Activated CD8-positive, alpha-beta T cell treated with anti-CD3 and anti-CD28 coated beads for 36 hours (primary cell): ENCODE measurements at regions of chr2 and their contacts with region 1.

Region 1: GRCh38 chr2:222318026-222318711 is 19.4 kb upstream of the PAX3 start:
- DNase-seq: peak; percentile 53
- ATAC-seq: peak; percentile 67
- H3K4me3 Mint-ChIP-seq: peak overlapping the region; percentile 78
- H3K27ac Mint-ChIP-seq: no peak overlapping the region
- H3K4me1 Mint-ChIP-seq: peaks cover 7% of the 10 kb centered on the region
- H3K27me3 Mint-ChIP-seq: peaks cover 62% of the 10 kb centered on the region
- CTCF ChIP-seq: peak; percentile 45

Region 2: DNA sequence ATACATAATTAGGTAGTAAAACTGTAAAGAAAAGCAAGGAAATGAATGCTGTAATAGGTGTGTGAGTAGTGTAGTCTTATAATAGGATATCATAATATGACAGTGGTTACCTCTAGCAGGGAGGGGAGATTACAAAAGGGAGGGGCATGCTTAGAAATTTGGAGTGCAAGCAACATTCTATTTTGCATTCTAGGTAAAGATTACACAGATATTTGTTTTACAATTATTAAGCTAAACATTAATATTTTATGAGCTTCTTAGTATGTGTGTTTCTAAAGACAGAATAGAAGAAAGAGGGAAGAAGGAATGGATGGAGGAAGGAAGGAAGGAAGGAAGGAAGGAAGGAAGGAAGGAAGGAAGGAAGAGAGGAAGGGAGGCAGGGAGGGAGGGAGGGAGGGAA is 197.2 kb before region 1 on chr2:
- CTCF ChIA-PET with region 1: no interaction called
- POLR2A ChIA-PET with region 1: no interaction called
- intact Hi-C with region 1: no loop called
- DNase-seq: no peak
- ATAC-seq: no peak
- H3K4me3 Mint-ChIP-seq: no peak overlapping the region
- H3K27ac Mint-ChIP-seq: no peak overlapping the region
- H3K4me1 Mint-ChIP-seq: no peaks in the 10 kb centered on the region
- H3K27me3 Mint-ChIP-seq: no peaks in the 10 kb centered on the region
- CTCF ChIP-seq: no peak

Region 3: GRCh38 chr2:222424729-222425671 is 106.8 kb after region 1 on chr2:
- CTCF ChIA-PET with region 1: no interaction called
- POLR2A ChIA-PET with region 1: no interaction called
- intact Hi-C with region 1: loop called (anchors 10 kb)
- DNase-seq: peak; percentile 27
- ATAC-seq: peak; percentile 19
- H3K4me3 Mint-ChIP-seq: peak overlapping the region; percentile 75
- H3K27ac Mint-ChIP-seq: peak overlapping the region; percentile 78
- H3K4me1 Mint-ChIP-seq: peaks cover 38% of the 10 kb centered on the region
- H3K27me3 Mint-ChIP-seq: peaks cover 49% of the 10 kb centered on the region
- CTCF ChIP-seq: no peak

Region 4: GRCh38 chr2:222561817-222562645 is 243.9 kb after region 1 on chr2:
- CTCF ChIA-PET with region 1: interaction called, 21 read pairs
- POLR2A ChIA-PET with region 1: no interaction called
- intact Hi-C with region 1: loop called (anchors 5 kb)
- DNase-seq: peak; percentile 40
- ATAC-seq: peak; percentile 76
- H3K4me3 Mint-ChIP-seq: no peak overlapping the region
- H3K27ac Mint-ChIP-seq: no peak overlapping the region
- H3K4me1 Mint-ChIP-seq: no peaks in the 10 kb centered on the region
- H3K27me3 Mint-ChIP-seq: no peaks in the 10 kb centered on the region
- CTCF ChIP-seq: peak; percentile 34

Region 5: DNA sequence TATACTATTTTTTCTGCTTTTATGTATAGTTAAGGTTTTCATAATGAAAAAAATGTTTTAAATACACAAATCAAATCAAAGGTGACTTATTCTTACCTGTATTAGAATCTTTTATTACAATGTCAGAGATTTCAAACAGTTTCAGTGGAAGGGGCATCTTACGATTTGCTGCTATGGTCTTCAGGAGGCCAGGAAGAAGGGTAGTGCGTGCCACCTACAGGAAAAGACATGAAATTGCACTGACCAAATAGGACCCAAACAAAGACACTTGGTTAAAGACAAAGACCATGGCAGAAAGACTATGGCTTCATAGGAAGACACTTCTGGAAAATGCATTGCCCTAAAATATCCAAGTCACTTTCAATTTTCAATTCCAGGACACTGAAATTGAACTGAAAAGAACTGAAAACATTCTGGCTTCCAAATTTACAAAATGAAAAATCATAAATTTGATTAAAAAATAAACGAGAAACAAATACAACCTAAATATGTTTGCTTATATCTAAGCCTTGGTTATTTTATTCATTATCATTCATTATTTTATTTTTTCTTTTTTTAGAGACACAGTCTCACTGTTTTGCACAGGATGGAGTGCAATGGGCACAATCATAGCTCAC is 295.7 kb after region 1 on chr2:
- CTCF ChIA-PET with region 1: interaction called, 4 read pairs
- POLR2A ChIA-PET with region 1: no interaction called
- intact Hi-C with region 1: loop called (anchors 5 kb)
- DNase-seq: peak; percentile 11
- ATAC-seq: peak; percentile 79
- H3K4me3 Mint-ChIP-seq: no peak overlapping the region
- H3K27ac Mint-ChIP-seq: no peak overlapping the region
- H3K4me1 Mint-ChIP-seq: no peaks in the 10 kb centered on the region
- H3K27me3 Mint-ChIP-seq: no peaks in the 10 kb centered on the region
- CTCF ChIP-seq: peak; percentile 61